ENCODE measurements at regions of chr2 and their contacts with region 1.

Region 1: DNA sequence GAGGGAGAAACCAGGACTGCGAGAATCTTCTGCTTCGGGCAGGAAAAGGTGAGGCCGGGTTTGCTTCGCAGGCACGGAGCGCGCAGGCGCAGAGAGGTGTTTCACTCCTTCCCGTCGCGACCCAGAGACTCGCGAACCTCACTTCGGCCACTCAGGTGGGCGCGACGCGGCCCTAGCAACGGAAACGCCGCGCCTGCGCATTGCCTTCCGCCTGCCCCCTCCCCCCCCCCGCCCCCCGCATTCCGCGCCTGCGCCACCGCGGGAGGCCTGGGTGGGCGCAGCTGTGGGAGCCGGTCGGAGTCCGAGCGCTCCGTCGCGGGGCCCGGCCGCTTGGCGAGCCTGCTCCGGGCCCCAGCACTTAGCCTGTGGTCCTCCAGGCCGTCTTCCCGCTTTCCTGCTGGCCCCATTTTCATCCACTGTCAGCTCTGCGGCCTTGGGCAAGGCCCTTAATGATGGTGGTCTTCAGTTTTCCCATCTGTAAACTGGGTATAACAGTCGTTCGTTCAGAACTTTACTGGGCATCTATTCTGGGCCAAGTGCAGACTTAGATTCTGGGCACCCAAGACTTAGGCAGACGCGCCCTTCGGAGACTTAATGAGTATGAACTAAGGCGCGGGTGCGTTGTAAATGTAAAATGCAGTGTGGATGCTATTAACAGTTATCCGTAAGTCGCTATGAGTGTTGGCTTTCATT is 62.1 kb upstream of the ACKR3 start:
- DNase-seq: peak; percentile 73 to 88
- ATAC-seq: peak; percentile 67
- H3K4me3 ChIP-seq: peak overlapping the region; percentile 35 to 43
- H3K27ac ChIP-seq: no peak overlapping the region
- H3K4me1 ChIP-seq: no peaks in the 10 kb centered on the region
- H3K27me3 ChIP-seq: no peaks in the 10 kb centered on the region

Region 2: DNA sequence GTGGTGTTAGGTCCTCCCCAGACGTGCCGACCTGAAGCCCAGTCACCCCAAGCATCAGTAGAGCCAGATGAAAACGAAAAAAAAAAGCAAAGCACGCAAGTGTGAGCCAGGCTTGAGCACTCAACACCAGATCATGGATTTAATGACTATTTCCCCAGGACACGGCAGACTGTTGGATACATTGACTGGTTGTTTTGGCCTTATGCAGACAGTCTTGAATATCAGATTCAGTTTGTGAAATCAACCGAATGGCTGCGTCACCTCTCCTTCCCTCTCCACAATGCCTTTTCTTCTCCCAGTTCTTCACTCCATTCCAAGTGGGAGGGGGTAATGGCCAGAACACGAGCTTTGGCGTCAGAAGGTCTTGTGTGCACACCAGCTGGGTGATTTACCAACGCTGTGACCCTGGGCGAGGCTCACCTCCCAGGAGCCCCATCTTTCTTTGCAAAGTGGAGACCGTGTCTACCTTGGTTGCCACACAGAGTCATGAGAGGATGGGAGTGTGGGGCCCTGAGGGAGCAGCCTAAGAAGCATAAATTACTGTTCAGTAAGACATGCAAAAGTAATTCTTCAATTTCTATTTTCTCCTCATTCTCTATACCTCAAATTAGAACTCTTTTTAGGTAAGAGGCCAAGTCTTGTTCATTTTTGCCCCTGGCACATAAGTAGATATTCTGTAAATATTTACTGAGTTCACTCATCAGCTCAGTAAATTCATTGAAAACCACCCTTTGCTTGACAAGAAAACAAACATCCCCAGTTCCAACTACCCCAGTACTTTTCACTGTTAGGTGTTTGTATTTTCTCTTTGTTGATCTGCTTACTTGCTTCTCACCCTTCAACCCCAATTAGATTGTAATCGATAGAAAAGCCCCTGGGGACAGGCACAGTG is 397.1 kb after region 1 on chr2:
- intact Hi-C with region 1: loop called in 1 of 2 experiments (anchors 10 kb)
- DNase-seq: peak in 1 of 2 donors; percentile 59
- ATAC-seq: peak; percentile 51
- H3K4me3 ChIP-seq: no peak overlapping the region
- H3K27ac ChIP-seq: no peak overlapping the region
- H3K4me1 ChIP-seq: no peaks in the 10 kb centered on the region
- H3K27me3 ChIP-seq: no peaks in the 10 kb centered on the region

Measured in aorta (tissue), 5 donors.